ENCODE measurements at regions of chr7 and their contacts with region 1.

Region 1: DNA sequence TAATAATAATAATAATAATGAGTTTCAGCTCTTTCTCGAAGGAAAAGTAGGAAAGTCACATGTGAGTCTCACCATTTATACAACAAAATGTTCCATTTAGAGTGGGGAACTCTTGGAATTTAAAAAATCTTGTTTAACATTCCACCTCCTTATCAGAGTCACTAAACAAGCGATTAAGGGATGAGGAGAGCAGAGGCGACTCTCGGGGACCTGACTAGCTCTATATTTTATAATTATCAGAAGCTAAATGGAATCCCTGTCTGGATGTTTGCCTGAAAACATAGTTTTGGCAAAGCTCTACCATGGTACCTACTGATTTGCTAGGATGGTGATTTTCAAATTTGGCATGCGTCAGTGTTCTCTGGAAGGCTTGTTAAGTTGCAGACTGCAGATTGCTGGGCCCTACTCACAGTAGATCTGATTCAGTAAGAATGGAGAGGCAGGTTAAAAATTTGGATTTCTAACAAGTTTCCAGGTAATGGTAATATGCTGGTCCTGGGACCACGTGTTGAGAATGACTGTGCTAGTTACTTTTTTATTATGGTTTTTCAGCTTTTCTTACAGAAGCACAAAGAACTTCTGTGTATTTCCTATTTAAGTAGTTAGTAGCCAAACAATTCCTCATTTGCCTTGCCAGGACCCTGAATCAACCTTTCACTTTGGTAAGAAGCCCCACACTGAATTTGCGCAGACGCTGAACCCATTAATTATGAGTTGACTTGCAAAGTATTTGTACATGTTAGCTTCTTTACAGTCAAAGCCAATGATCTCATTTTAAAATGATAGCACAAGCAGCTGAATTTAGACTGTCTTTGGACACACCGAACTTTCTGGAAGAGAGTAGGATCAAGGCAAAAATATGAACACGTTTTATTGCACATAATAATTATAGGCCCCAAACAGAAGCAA is 39.5 kb downstream of the CPED1 start:
- DNase-seq: peak; percentile 23 to 38
- H3K4me3 ChIP-seq: no peak overlapping the region
- H3K4me3 Mint-ChIP-seq: peak overlapping the region; percentile 43
- H3K27ac Mint-ChIP-seq: peak overlapping the region; percentile 82
- H3K4me1 ChIP-seq: peaks cover 41% of the 10 kb centered on the region
- H3K4me1 Mint-ChIP-seq: peaks cover 27% of the 10 kb centered on the region
- H3K27me3 ChIP-seq: no peaks in the 10 kb centered on the region
- H3K27me3 Mint-ChIP-seq: no peaks in the 10 kb centered on the region
- CTCF ChIP-seq: no peak

Region 2: GRCh38 chr7:120950539-120951308 is 77.3 kb before region 1 on chr7 and contains the start of gene ING3:
- CTCF ChIA-PET with region 1: no interaction called
- POLR2A ChIA-PET with region 1: interaction called, 6 read pairs
- intact Hi-C with region 1: loop called (anchors 5 kb)
- DNase-seq: peak; percentile 97
- H3K4me3 ChIP-seq: peak within 1 kb of the TSS; percentile 85
- H3K4me3 Mint-ChIP-seq: peak within 1 kb of the TSS; percentile 96
- H3K27ac Mint-ChIP-seq: peak within 1 kb of the TSS; percentile 100
- H3K4me1 ChIP-seq: no peaks in the 10 kb centered on the region
- H3K4me1 Mint-ChIP-seq: peaks cover 9% of the 10 kb centered on the region
- H3K27me3 ChIP-seq: no peaks in the 10 kb centered on the region; the same call in 1 of the 2 replicates
- H3K27me3 Mint-ChIP-seq: peaks cover 4% of the 10 kb centered on the region
- CTCF ChIP-seq: no peak
- total RNA-seq, gene ING3: 13.7 and 14.6 TPM in 2 replicates